ENCODE measurements at regions of chr17 and their contacts with region 1.

Region 1: DNA sequence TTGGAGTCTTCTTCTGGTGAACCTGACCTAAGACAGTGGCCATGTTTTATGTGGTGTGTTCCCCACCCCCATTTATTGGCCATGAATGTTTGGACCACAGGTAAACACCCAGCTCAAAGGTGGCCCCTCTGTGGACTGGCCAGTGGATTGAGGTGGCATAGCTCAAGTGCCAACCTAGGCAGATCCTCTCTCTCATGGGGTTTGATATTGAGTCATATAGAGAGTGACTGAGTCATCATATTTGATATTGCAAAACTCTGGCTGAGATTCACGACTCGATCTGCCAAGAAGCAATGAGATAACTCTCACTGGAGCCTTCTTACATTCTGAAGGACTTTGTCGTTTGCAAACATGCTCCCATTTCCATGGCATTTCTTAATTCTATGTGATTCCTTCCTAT is 10.5 kb upstream of the TEKT3 start:
- DNase-seq: peak; percentile 76 to 86
- ATAC-seq: peak; percentile 94 to 96
- H3K4me3 ChIP-seq: no peak overlapping the region
- H3K27ac ChIP-seq: peak overlapping the region; percentile 24 to 72; a peak in 5 of 6 replicates
- H3K4me1 ChIP-seq: peaks cover 31% of the 10 kb centered on the region
- CTCF ChIP-seq: no peak
- EP300 ChIP-seq: no peak
- POLR2A ChIP-seq: no peak
- RAD21 ChIP-seq: no peak

Region 2: GRCh38 chr17:15341385-15341849 is 10.5 kb before region 1 on chr17 and contains the start of gene TEKT3:
- CTCF ChIA-PET with region 1: interaction called, 15 read pairs
- POLR2A ChIA-PET with region 1: no interaction called
- DNase-seq: peak; percentile 81 to 90
- ATAC-seq: peak; percentile 100
- H3K4me3 ChIP-seq: peak within 1 kb of the TSS; percentile 52
- H3K27ac ChIP-seq: peak within 1 kb of the TSS in 1 of 2 experiments; percentile 51; a peak in 3 of 6 replicates
- H3K4me1 ChIP-seq: peaks cover 10% of the 10 kb centered on the region
- CTCF ChIP-seq: no peak
- EP300 ChIP-seq: no peak
- POLR2A ChIP-seq: no peak
- RAD21 ChIP-seq: no peak
- polyA plus RNA-seq, gene TEKT3: 0.21 and 0.49 TPM in 2 replicates

Region 3: GRCh38 chr17:15392326-15392741 is 40.4 kb after region 1 on chr17:
- CTCF ChIA-PET with region 1: no interaction called
- POLR2A ChIA-PET with region 1: no interaction called
- DNase-seq: peak in 1 of 2 experiments; percentile 15
- ATAC-seq: peak; percentile 47 to 58; a peak in 5 of 6 replicates
- H3K4me3 ChIP-seq: no peak overlapping the region
- H3K27ac ChIP-seq: no peak overlapping the region
- H3K4me1 ChIP-seq: no peaks in the 10 kb centered on the region
- CTCF ChIP-seq: no peak
- EP300 ChIP-seq: no peak
- POLR2A ChIP-seq: no peak
- RAD21 ChIP-seq: no peak

Measured in A549 (cell line).